Ascending aorta (tissue), 2 donors: ENCODE measurements at regions of chr12 and their contacts with region 1.

Region 1: DNA sequence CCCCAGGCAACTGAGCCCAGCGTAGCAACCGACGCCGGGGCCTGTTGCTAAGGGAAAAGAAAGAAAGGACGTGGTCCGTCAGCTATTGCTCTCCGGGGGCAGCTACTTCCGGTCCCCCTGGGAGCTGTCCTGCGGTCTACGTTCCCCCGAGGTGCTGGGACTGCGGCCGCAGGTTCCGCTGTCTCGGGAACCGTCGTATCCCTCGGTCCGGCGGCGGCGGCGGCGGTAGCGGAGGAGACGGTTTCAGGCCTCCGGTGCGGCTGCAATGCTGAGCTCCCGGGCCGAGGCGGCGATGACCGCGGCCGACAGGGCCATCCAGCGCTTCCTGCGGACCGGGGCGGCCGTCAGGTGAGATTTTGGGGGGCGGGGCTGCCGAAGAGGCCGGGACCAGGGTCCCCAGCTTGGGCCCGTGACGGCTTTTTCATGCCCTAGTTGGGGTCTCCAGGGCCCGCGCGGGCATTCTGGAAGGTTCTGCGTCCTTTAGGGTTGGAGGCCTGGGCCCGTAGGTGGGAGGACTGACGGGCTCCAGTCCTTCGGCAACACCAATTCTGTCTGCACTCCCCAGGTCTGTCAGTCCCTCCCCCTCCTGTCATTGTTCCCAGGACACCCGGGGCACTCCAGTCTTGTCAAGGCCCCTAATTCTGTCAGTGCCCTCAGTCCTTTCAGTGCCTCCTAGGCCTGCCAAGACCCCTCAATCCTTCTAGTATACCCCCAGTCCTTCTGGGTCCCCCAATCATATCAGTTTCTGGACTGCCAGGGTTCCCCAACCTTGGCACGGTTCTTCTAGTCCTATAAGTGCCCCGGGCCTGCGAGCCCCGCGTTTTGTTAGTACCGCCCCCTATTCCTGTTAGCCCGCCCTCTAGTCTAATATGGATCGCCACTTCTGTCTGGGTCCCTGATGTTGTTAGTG is at the start of gene USP30:
- DNase-seq: peak; percentile 25 to 88
- H3K4me3 ChIP-seq: peak within 1 kb of the TSS; percentile 71 to 96
- H3K27ac ChIP-seq: peak within 1 kb of the TSS; percentile 67 to 81
- H3K4me1 ChIP-seq: peaks cover 0 to 15% of the 10 kb centered on the region in 2 donors
- H3K27me3 ChIP-seq: no peaks in the 10 kb centered on the region
- CTCF ChIP-seq: no peak
- total RNA-seq, gene USP30: 36.0 TPM

Region 2: GRCh38 chr12:107533218-107533617 is 1519.5 kb before region 1 on chr12:
- intact Hi-C with region 1: no loop called
- DNase-seq: no peak
- H3K4me3 ChIP-seq: no peak overlapping the region
- H3K27ac ChIP-seq: no peak overlapping the region
- H3K4me1 ChIP-seq: no peaks in the 10 kb centered on the region
- H3K27me3 ChIP-seq: no peaks in the 10 kb centered on the region
- CTCF ChIP-seq: no peak

Region 3: GRCh38 chr12:108640802-108641445 is 411.7 kb before region 1 on chr12:
- intact Hi-C with region 1: loop called (anchors 10 kb)
- DNase-seq: no peak
- H3K4me3 ChIP-seq: no peak overlapping the region
- H3K27ac ChIP-seq: no peak overlapping the region
- H3K4me1 ChIP-seq: peaks cover 13 to 26% of the 10 kb centered on the region in 2 donors
- H3K27me3 ChIP-seq: no peaks in the 10 kb centered on the region
- CTCF ChIP-seq: no peak

Region 4: DNA sequence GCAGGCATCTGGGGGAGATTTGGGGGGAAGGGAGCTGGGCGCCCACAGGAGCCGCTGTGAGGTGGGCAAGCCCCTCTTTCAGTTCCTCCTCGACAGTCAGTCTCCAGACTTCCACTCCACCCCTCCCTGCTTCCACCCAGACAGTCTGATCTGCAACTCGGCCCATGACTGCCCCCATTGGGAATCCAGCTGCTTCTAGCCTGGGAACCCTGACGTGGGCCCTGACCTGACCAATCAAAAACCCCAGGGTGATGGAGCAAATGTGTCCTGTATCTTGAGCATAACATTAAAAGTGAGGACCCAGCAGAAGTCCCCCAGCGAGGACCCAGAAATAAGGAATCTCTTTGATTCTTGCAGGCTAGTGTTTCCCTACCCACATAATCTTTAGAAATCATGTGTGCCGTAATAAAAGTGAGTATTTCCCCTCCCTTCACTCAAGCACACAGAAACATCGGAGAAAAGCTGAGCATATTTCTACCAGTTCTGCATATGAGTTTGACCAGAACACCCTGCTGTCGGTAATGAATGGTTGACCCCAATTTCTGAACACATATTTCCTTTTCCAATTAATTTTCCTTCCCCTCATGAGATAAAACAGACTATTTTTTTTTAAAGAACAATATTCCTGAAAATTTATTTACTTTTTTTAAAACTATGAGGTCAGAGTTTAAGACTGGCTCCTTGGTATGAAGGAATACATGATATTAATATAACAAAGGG is 201.7 kb before region 1 on chr12:
- intact Hi-C with region 1: no loop called
- DNase-seq: peak in 1 of 2 donors; percentile 85
- H3K4me3 ChIP-seq: no peak overlapping the region
- H3K27ac ChIP-seq: peak overlapping the region; percentile 62 to 97
- H3K4me1 ChIP-seq: peaks cover 26 to 57% of the 10 kb centered on the region in 2 donors
- H3K27me3 ChIP-seq: no peaks in the 10 kb centered on the region
- CTCF ChIP-seq: no peak

Region 5: GRCh38 chr12:109232731-109233130 is 180.1 kb after region 1 on chr12:
- intact Hi-C with region 1: no loop called
- DNase-seq: no peak
- H3K4me3 ChIP-seq: no peak overlapping the region
- H3K27ac ChIP-seq: no peak overlapping the region
- H3K4me1 ChIP-seq: no peaks in the 10 kb centered on the region
- H3K27me3 ChIP-seq: no peaks in the 10 kb centered on the region
- CTCF ChIP-seq: no peak